HepG2 (cell line): ENCODE measurements at regions of chr15 and their contacts with region 1.

Region 1: DNA sequence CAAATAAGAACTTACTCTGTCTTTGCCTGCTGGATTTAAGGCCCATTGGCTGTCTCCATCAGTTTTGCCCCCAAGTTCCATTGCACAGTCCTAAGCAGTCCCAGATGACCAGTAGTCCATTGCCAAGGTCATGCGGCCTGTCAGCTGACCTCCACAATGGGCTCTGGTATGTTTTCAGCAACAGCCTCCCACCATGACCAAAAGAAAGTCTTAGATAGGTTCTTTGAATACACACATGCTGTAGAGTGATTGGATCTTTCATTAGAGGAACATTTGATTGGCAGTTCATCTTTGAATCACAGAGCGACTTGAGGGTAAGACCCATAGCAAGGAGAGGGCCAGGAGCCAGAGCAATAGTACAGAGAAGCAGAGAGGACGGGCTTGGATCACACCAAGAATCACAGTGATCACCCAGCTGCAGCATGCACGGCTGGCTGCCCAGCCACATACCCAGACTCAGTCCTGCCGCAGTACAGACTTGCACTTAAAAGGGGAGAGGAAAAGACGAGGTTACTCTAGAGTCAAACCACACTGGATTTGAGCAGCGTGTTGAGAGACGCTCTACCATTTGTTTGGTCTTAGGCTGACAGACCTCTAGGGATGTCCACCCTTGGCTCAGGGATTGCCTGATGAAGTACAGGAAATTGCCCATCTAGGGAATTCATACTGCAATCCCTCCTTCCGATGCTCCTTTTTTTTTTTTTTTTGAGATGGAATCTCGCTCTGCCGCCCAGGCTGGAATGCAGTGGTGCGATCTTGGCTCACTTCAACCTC is 50.4 kb downstream of the APH1B start:
- DNase-seq: no peak
- ATAC-seq: no peak
- H3K4me3 ChIP-seq: no peak overlapping the region
- H3K27ac ChIP-seq: no peak overlapping the region
- H3K4me1 ChIP-seq: no peaks in the 10 kb centered on the region
- H3K27me3 ChIP-seq: peaks cover 1 to 4% of the 10 kb centered on the region in 2 experiments; a peak in 3 of 5 replicates
- CTCF ChIP-seq: no peak
- EP300 ChIP-seq: no peak
- POLR2A ChIP-seq: no peak
- RAD21 ChIP-seq: no peak

Region 2: GRCh38 chr15:63246691-63247464 is 81.0 kb before region 1 on chr15:
- CTCF ChIA-PET with region 1: no interaction called
- POLR2A ChIA-PET with region 1: no interaction called
- in situ Hi-C with region 1: no loop called
- intact Hi-C with region 1: no loop called
- DNase-seq: peak; percentile 13
- ATAC-seq: no peak
- H3K4me3 ChIP-seq: no peak overlapping the region
- H3K27ac ChIP-seq: no peak overlapping the region
- H3K4me1 ChIP-seq: peaks cover 10% of the 10 kb centered on the region
- H3K27me3 ChIP-seq: no peaks in the 10 kb centered on the region
- CTCF ChIP-seq: no peak
- EP300 ChIP-seq: peak in 1 of 2 experiments; percentile 26; a peak in 1 of 4 replicates
- POLR2A ChIP-seq: no peak
- RAD21 ChIP-seq: no peak

Region 3: DNA sequence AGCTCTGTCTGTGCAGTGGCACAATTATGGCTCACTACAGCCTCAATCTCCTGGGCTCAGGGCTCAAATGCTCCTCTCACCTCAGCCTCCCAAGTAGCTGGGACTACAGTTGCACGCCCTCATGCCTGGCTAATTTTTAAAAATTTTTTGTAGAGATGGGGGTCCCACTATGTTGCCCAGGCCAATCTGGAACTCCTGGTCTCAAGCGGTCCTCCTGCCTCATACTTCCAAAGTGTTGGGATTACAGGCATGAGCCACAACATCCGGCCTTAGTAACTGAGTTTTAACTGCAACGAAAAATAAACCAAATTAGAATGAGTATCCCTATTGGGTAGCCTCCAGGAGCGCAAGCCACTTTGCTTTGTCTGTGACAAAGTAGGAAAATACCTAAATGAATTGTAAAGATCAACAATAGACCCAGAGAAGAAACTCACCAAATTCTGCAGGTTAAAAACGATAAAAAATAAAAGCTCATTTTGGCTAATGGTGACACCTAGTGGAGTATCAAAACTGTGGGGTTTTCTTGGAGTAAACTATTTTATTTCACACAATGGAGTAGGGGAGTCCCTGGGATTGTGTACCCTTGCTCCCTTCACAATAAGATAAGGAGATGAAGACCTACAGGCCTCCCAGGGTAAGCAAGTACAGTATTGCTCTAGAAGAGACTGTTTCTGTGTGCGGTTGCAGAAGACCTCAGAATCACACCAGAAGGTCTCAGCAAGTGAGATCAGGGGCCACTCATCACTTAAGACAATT is 74.8 kb after region 1 on chr15:
- CTCF ChIA-PET with region 1: no interaction called
- POLR2A ChIA-PET with region 1: no interaction called
- in situ Hi-C with region 1: no loop called
- intact Hi-C with region 1: loop called (anchors 2 kb)
- DNase-seq: peak; percentile 23
- ATAC-seq: peak; percentile 73
- H3K4me3 ChIP-seq: no peak overlapping the region
- H3K27ac ChIP-seq: no peak overlapping the region
- H3K4me1 ChIP-seq: peaks cover 36% of the 10 kb centered on the region
- H3K27me3 ChIP-seq: peaks cover 2 to 3% of the 10 kb centered on the region in 2 experiments; a peak in 2 of 5 replicates
- CTCF ChIP-seq: peak; percentile 55
- EP300 ChIP-seq: no peak
- POLR2A ChIP-seq: no peak
- RAD21 ChIP-seq: no peak